ENCODE measurements at regions of chr6 and their contacts with region 1.

Region 1: GRCh38 chr6:21064756-21065340 is 528.7 kb upstream of the SOX4 start:
- DNase-seq: peak; percentile 66
- H3K4me3 ChIP-seq: no peak overlapping the region
- H3K27ac ChIP-seq: no peak overlapping the region
- H3K4me1 ChIP-seq: peaks cover 21% of the 10 kb centered on the region
- H3K27me3 ChIP-seq: no peaks in the 10 kb centered on the region
- CTCF ChIP-seq: no peak
- POLR2A ChIP-seq: no peak

Region 2: GRCh38 chr6:21188505-21189223 is 123.8 kb after region 1 on chr6:
- CTCF ChIA-PET with region 1: no interaction called
- POLR2A ChIA-PET with region 1: interaction called, 3 read pairs
- dilution Hi-C with region 1: no loop called
- intact Hi-C with region 1: loop called (anchors 2 kb)
- DNase-seq: peak; percentile 64
- H3K4me3 ChIP-seq: no peak overlapping the region
- H3K27ac ChIP-seq: peak overlapping the region; percentile 71
- H3K4me1 ChIP-seq: peaks cover 35% of the 10 kb centered on the region
- H3K27me3 ChIP-seq: no peaks in the 10 kb centered on the region
- CTCF ChIP-seq: no peak
- POLR2A ChIP-seq: no peak

Measured in endothelial cell of umbilical vein (primary cell).